ENCODE measurements at regions of chr1 and their contacts with region 1.

Region 1: GRCh38 chr1:242454262-242455045 is 70.0 kb downstream of the PLD5 start:
- DNase-seq: peak; percentile 39
- ATAC-seq: no peak
- H3K4me3 ChIP-seq: no peak overlapping the region
- H3K4me3 Mint-ChIP-seq: no peak overlapping the region
- H3K27ac ChIP-seq: no peak overlapping the region
- H3K27ac Mint-ChIP-seq: no peak overlapping the region
- H3K4me1 ChIP-seq: no peaks in the 10 kb centered on the region
- H3K4me1 Mint-ChIP-seq: peaks cover 1% of the 10 kb centered on the region
- H3K27me3 ChIP-seq: peaks cover 0 to 8% (median 0%) of the 10 kb centered on the region in 4 experiments
- H3K27me3 Mint-ChIP-seq: peaks cover 59% of the 10 kb centered on the region
- CTCF ChIP-seq: peak; percentile 55

Region 2: GRCh38 chr1:242467556-242468145 is 13.2 kb after region 1 on chr1:
- CTCF ChIA-PET with region 1: interaction called, 12 read pairs
- POLR2A ChIA-PET with region 1: no interaction called
- intact Hi-C with region 1: no loop called
- DNase-seq: peak; percentile 53
- ATAC-seq: peak; percentile 14
- H3K4me3 ChIP-seq: no peak overlapping the region
- H3K4me3 Mint-ChIP-seq: no peak overlapping the region
- H3K27ac ChIP-seq: no peak overlapping the region
- H3K27ac Mint-ChIP-seq: no peak overlapping the region
- H3K4me1 ChIP-seq: no peaks in the 10 kb centered on the region
- H3K4me1 Mint-ChIP-seq: no peaks in the 10 kb centered on the region
- H3K27me3 ChIP-seq: peaks cover 0 to 3% (median 0%) of the 10 kb centered on the region in 4 experiments
- H3K27me3 Mint-ChIP-seq: peaks cover 22% of the 10 kb centered on the region
- CTCF ChIP-seq: peak; percentile 80

Region 3: GRCh38 chr1:243325305-243325890 is 870.9 kb after region 1 on chr1:
- CTCF ChIA-PET with region 1: interaction called, 8 read pairs
- POLR2A ChIA-PET with region 1: no interaction called
- intact Hi-C with region 1: loop called (anchors 5 kb)
- DNase-seq: peak; percentile 69
- ATAC-seq: peak; percentile 49
- H3K4me3 ChIP-seq: no peak overlapping the region
- H3K4me3 Mint-ChIP-seq: no peak overlapping the region
- H3K27ac ChIP-seq: no peak overlapping the region
- H3K27ac Mint-ChIP-seq: no peak overlapping the region
- H3K4me1 ChIP-seq: no peaks in the 10 kb centered on the region
- H3K4me1 Mint-ChIP-seq: no peaks in the 10 kb centered on the region
- H3K27me3 ChIP-seq: no peaks in the 10 kb centered on the region
- H3K27me3 Mint-ChIP-seq: no peaks in the 10 kb centered on the region
- CTCF ChIP-seq: peak; percentile 98

Measured in B cell (primary cell).